PC-9 (cell line): ENCODE measurements at regions of chr1 and their contacts with region 1.

Region 1: DNA sequence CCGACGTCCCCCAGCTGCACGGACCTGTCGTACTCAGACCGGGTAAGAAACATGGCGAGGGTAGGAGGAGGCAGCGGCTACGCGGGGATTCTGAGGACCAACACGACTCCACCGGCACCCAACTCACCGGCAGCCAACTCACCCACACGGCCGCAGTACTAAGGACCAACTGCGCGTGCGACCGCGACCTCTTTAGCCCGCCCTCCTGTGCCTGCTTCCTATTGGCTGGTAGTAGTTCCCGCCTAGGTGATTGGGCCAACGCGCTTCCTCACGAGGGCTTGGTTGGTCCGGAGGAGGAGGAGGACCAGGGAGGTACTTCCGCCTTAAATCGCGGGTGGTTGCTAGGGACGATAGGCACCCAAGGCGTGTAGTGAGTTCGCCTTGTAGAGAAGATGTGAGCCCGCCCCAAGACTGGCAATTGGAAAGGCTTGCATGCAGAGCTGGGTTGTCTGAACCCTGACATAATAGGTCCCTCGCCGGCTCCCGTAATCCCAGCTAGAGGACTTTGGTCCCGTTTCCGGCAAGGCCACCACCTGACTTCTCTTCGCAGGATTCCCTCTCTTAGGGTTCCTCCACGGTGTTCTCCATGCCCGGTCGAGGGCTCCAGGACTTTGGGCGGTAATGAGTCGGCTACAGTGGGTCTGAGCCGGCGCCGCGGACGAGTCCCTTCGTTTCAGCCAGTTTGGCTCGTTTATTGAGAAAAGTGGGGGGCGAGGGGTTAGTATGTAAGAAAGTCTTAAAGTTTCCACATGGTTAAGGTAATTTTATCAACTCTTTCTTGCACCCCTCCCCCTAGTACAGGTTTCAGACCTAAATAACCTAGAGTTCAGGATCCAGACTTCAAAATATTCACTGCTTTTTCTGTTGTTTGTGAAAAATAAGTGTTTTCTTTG is at the start of gene PSMA5:
- DNase-seq: peak; percentile 94 to 100
- H3K4me3 ChIP-seq: peak within 1 kb of the TSS; percentile 98
- H3K27ac ChIP-seq: peak within 1 kb of the TSS; percentile 88
- H3K4me1 ChIP-seq: peaks cover 27% of the 10 kb centered on the region
- H3K27me3 ChIP-seq: no peaks in the 10 kb centered on the region
- CTCF ChIP-seq: no peak
- total RNA-seq, gene PSMA5: 168 and 172 TPM in 2 replicates

Region 2: DNA sequence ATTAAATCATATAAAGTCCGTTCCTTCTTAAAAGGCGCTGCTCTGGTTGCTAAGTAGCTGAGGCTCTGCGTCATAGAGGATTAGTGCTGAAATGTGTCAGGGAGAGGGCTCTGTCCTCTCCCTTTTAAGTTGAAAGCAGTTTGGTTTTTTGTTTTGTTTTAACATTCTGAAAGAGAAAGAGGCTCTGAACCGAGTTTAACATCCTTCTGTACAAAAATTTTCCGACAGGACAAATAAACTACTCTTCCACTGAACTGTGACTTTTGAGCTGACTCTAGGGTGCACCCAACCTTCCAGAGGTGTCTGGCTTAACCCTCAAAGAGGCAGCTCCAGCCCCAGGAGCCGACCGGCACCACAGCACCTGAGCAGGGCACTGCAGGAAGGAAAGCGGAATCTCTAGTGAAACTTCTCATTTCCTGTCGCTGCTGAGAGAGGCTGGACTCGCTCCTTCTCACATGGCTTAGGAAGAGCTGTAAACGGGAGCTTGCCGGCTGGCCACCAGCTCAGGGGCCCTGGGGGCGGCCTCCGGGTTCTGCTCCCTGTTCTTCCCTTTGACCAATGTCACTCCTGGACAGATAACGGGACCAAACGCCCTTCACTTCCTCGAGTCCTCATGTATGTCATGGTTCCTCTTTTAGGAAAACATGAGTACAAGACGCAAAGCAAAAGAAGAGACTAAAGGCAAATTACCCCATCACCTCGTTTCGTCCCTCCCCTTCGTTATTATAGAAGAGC is 1462.8 kb before region 1 on chr1:
- CTCF ChIA-PET with region 1: no interaction called
- POLR2A ChIA-PET with region 1: interaction called, 18 read pairs
- intact Hi-C with region 1: no loop called
- DNase-seq: no peak
- H3K4me3 ChIP-seq: no peak overlapping the region
- H3K27ac ChIP-seq: no peak overlapping the region
- H3K4me1 ChIP-seq: peaks cover 11% of the 10 kb centered on the region
- H3K27me3 ChIP-seq: no peaks in the 10 kb centered on the region
- CTCF ChIP-seq: no peak

Region 3: GRCh38 chr1:108643492-108644335 is 782.8 kb before region 1 on chr1:
- CTCF ChIA-PET with region 1: no interaction called
- POLR2A ChIA-PET with region 1: interaction called, 27 read pairs
- intact Hi-C with region 1: no loop called
- DNase-seq: peak; percentile 23 to 69
- H3K4me3 ChIP-seq: no peak overlapping the region
- H3K27ac ChIP-seq: no peak overlapping the region
- H3K4me1 ChIP-seq: peaks cover 11% of the 10 kb centered on the region
- H3K27me3 ChIP-seq: no peaks in the 10 kb centered on the region
- CTCF ChIP-seq: peak; percentile 82

Region 4: DNA sequence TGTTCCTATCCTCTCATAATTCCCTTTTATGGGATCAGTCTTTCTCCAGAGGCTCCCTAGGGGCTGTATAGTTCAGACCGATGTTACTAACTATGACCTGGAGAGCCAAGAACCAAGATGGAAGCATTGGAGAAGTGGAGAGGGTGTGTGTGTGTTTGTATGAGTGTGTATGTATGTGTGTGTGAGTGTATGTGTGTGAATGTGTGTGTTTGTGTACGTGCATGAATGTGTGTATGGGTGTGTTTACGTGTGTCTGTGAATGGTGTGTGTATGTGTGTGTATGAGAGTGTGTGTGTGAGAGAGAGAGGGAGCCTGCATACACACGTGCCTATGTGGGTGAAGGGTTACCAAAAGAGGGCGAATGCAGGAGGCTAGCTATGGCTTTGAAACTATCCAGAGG is 124.7 kb before region 1 on chr1:
- CTCF ChIA-PET with region 1: no interaction called
- POLR2A ChIA-PET with region 1: no interaction called
- intact Hi-C with region 1: no loop called
- DNase-seq: no peak
- H3K4me3 ChIP-seq: no peak overlapping the region
- H3K27ac ChIP-seq: no peak overlapping the region
- H3K4me1 ChIP-seq: no peaks in the 10 kb centered on the region
- H3K27me3 ChIP-seq: no peaks in the 10 kb centered on the region
- CTCF ChIP-seq: no peak

Region 5: DNA sequence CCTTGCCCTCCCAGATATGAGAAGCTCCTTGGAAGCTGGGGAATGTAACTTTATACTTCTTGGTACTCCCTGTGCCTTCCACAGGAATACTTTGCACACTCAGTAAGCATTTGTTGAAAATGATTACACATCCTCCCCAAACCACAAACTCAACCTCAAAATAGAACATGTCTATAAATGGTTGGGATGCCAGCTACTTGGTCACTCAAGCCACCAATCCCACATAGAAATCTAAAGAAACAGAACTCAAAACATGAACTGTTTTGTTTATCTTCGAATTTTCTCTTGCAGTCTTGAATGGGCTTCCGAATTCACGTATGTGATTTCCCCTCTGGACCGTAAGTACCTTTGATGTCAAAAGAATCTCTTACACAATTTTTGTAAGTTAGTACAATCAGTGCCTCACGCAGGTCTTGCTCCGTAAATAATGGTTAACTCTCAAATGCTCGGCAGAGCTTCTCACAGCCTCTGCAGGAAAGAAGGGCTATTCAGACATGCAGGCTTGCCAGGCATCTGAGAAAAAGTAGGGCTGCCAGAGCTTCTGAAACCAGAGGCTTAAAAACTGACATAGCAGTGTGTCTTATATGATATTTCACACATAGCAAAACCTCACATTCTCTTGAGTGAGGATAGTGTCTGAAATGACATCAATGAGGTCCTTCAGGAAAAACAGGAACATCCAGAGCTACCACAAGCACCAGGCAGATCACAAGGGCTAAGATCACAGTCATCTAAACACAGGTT is 55.6 kb before region 1 on chr1:
- CTCF ChIA-PET with region 1: no interaction called
- POLR2A ChIA-PET with region 1: interaction called, 14 read pairs
- intact Hi-C with region 1: no loop called
- DNase-seq: peak; percentile 2 to 82
- H3K4me3 ChIP-seq: no peak overlapping the region
- H3K27ac ChIP-seq: peak overlapping the region; percentile 45
- H3K4me1 ChIP-seq: peaks cover 22% of the 10 kb centered on the region
- H3K27me3 ChIP-seq: no peaks in the 10 kb centered on the region
- CTCF ChIP-seq: no peak

Region 6: DNA sequence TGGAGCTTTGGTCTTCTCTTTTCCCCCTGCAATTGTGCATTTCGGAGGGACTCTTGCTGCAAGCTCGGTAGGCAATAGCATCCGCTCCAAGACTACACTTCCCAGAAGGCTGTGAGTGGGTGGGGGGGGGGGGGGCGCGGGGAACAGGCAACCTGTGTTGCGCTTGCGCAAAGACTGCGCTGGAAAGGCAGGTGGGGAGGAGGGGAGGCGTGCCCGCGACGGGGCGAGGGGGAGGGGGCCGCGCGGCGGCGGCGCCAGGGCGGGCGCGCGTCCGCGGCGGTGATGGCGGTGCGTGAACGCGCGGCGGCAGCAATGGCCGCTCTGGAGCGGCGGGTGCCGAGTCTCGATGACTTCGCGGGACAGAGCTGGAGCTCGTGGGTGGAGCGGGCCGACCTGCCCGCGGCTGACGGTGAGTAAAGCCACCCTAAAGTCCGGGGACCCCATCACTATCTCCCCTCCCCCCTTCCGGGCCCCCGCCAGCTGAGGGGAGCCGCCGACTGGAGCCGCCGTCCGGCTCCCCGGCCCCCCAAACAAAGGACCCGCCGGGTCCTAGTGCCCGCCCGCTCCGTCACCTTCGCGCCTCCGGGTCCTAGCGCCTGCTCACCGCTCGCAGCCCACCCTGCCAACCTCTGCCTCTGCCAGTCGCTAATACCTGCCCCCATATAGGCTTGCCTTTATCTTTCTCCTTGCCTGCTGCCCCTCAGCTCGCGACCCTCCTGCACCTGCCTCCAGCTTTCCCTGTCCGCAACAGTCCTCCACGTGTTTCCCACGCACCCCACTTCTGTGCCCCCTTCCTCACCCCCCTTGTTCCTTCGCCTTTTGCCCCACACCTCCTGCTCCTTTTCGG is 57.4 kb after region 1 on chr1 and contains the start of gene ATXN7L2:
- CTCF ChIA-PET with region 1: no interaction called
- POLR2A ChIA-PET with region 1: no interaction called
- intact Hi-C with region 1: loop called (anchors 1 kb)
- DNase-seq: peak; percentile 75 to 87
- H3K4me3 ChIP-seq: peak within 1 kb of the TSS; percentile 68
- H3K27ac ChIP-seq: peak within 1 kb of the TSS; percentile 63
- H3K4me1 ChIP-seq: peaks cover 11% of the 10 kb centered on the region
- H3K27me3 ChIP-seq: peaks cover 37% of the 10 kb centered on the region
- CTCF ChIP-seq: no peak
- total RNA-seq, gene ATXN7L2: 4.7 and 5.7 TPM in 2 replicates

Region 7: GRCh38 chr1:109532365-109533136 is 106.0 kb after region 1 on chr1:
- CTCF ChIA-PET with region 1: interaction called, 4 read pairs
- POLR2A ChIA-PET with region 1: no interaction called
- intact Hi-C with region 1: loop called (anchors 2 kb)
- DNase-seq: peak; percentile 66 to 81
- H3K4me3 ChIP-seq: no peak overlapping the region
- H3K27ac ChIP-seq: no peak overlapping the region
- H3K4me1 ChIP-seq: no peaks in the 10 kb centered on the region
- H3K27me3 ChIP-seq: 0 out of 2 replicates have a peak, but pooled peaks cover under 1% of the 10 kb centered on the region
- CTCF ChIP-seq: peak; percentile 94

Region 8: DNA sequence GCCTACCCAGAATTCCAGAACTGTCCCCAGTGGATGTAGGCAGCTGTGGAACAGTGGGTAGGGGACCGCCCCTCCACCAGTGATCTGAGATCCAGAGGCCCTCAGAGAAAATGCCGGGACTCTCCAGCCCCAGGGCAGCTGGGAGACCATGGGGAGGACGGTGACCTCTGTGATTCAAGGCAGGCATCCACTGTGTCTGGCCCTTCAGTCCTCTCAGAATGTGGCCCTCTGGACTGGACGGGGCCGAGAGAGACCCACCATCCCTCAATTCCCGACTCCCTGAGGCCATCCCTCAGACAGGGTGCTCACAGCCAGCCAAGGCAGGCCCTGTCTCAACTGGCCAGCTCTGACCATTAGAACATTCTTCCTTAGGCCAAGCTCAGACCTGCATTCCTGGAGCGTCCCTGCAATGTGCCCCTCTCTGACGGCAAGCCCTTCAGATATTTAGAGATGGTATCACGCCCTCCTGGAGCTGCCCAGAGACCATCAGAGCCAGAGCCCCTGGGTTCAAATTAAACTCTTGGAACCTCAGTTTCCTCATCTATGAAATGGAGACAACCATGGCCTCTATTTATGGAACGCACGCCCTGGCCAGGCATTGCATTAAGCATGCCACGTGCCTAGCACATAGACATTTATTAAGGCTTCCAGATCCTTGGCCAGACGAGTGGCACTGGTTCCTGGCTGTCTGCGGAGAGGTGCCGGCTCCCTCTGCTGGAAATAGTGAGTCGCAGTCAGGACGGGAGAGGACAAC is 346.8 kb after region 1 on chr1:
- CTCF ChIA-PET with region 1: no interaction called
- POLR2A ChIA-PET with region 1: interaction called, 11 read pairs
- intact Hi-C with region 1: no loop called
- DNase-seq: peak; percentile 78 to 82
- H3K4me3 ChIP-seq: no peak overlapping the region
- H3K27ac ChIP-seq: no peak overlapping the region
- H3K4me1 ChIP-seq: peaks cover 46% of the 10 kb centered on the region
- H3K27me3 ChIP-seq: no peaks in the 10 kb centered on the region
- CTCF ChIP-seq: peak; percentile 97